ENCODE measurements at regions of chr13 and their contacts with region 1.

Region 1: DNA sequence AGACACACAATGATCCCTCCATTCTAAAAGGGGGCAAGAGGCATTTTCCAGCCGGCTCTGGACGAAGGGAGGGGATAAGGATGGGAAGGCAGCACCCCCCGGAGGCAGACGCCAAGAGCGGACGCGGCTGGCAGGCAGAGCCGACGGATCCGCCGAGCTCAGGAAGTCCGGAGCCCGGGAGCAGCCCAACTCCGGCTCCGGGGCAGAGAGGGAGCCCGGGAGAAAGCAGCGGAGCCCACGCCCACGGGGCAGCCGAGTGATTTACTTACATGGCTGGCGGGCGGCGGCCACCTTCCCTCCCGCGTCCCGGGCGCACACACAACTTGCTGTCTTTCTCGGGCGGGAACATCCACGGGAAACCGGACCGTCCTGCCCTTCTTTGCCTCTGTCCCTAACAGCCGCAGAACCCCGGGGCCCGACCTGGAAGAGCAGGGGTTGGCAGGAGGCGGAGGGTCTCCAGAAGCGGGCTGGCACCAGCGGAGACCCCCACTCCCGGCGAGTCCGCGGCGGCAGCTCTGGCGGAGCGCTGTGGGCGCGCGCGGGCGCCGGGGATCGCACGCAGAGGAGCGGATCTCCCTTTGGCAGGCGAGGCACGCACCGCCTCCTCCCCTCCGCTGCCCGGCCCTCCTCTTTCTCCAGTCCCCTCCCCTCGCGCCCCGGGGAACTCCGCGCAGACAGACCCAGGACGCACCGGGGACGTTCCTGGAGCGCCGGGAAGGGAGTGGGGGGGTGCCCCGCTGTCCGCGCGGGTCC is at the start of gene LHFPL6:
- DNase-seq: peak; percentile 76 to 77
- H3K4me3 ChIP-seq: peak within 1 kb of the TSS; percentile 51 to 77 (median 75)
- H3K27ac ChIP-seq: peak within 1 kb of the TSS; percentile 52 to 87 (median 74)
- H3K4me1 ChIP-seq: peaks cover 7 to 9% of the 10 kb centered on the region in 2 donors
- H3K27me3 ChIP-seq: no peaks in the 10 kb centered on the region
- CTCF ChIP-seq: no peak
- POLR2A ChIP-seq: peak in 1 of 2 donors; percentile 68
- total RNA-seq, gene LHFPL6: 23.6 to 86.3 (median 42.0) TPM

Region 2: GRCh38 chr13:39273953-39274738 is 328.6 kb before region 1 on chr13:
- intact Hi-C with region 1: loop called (anchors 5 kb)
- DNase-seq: peak; percentile 26 to 37
- H3K4me3 ChIP-seq: no peak overlapping the region
- H3K27ac ChIP-seq: no peak overlapping the region
- H3K4me1 ChIP-seq: no peaks in the 10 kb centered on the region
- H3K27me3 ChIP-seq: no peaks in the 10 kb centered on the region
- CTCF ChIP-seq: peak in 3 of 6 experiments; percentile 27 to 40 (median 30)
- POLR2A ChIP-seq: no peak

Region 3: DNA sequence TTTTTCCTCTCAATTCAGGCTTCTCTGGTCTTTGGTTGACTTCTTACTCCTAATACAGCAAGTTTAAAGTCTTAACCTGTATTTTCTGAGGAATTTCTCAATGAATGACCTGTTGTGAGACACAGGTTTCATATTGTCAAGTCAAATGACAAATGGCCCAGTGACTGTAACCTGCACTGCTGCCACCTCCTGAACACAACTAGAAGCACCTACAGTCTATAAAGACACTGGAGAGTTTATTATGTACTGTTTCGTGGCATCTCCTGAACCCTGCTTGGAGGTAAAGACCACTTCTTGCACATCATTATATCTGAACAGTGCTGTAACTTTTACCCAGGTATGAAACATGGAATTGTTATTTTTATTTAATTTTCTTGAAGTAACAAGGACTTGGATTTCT is 409.4 kb after region 1 on chr13:
- intact Hi-C with region 1: no loop called
- DNase-seq: no peak
- H3K4me3 ChIP-seq: no peak overlapping the region
- H3K27ac ChIP-seq: no peak overlapping the region
- H3K4me1 ChIP-seq: peaks cover 0 to 6% of the 10 kb centered on the region in 2 donors
- H3K27me3 ChIP-seq: no peaks in the 10 kb centered on the region
- CTCF ChIP-seq: no peak
- POLR2A ChIP-seq: no peak

Measured in thyroid gland (tissue), 4 donors.